Caco-2 (cell line): ENCODE measurements at regions of chr5 and their contacts with region 1.

Region 1: GRCh38 chr5:38666668-38667498 is 110.4 kb upstream of the LIFR start:
- DNase-seq: peak; percentile 52 to 56
- H3K4me3 ChIP-seq: no peak overlapping the region
- H3K4me3 Mint-ChIP-seq: no peak overlapping the region
- H3K27ac Mint-ChIP-seq: peak overlapping the region; percentile 13
- H3K4me1 ChIP-seq: peaks cover 58% of the 10 kb centered on the region
- H3K4me1 Mint-ChIP-seq: peaks cover 45% of the 10 kb centered on the region
- H3K27me3 ChIP-seq: no peaks in the 10 kb centered on the region
- H3K27me3 Mint-ChIP-seq: no peaks in the 10 kb centered on the region
- CTCF ChIP-seq: peak; percentile 60 to 73

Region 2: DNA sequence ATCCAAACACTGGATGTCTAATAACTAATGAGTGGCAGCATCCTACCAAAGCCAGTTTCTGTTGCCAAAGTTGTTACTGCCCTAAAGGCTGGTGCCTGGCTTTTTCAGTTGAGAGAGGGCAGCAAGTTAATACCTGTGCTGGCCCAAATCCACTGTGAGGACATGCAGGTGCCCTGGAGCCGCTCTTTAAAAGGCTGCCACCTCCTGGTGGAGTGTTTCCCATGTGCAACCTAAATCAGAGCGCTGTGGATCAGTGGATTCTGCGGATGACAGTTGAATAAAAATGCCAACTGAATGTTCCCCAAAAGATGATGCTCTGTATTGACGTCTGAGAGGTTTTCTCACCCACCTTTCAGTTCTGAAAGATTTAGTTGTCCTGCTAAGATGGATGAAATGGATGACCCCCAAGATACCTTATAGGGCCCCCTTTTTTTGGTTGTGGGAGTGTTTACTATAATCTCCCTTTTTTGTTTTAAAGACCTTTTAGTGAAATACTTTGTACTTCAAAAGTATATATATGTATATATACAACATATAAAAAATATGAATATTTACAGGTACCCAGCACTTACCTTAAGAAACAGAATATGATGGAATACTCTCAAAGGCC is 262.1 kb before region 1 on chr5:
- CTCF ChIA-PET with region 1: no interaction called
- POLR2A ChIA-PET with region 1: no interaction called
- intact Hi-C with region 1: no loop called
- DNase-seq: peak; percentile 46
- H3K4me3 ChIP-seq: no peak overlapping the region
- H3K4me3 Mint-ChIP-seq: no peak overlapping the region
- H3K27ac Mint-ChIP-seq: no peak overlapping the region
- H3K4me1 ChIP-seq: no peaks in the 10 kb centered on the region
- H3K4me1 Mint-ChIP-seq: no peaks in the 10 kb centered on the region
- H3K27me3 ChIP-seq: peaks cover 1% of the 10 kb centered on the region; the same call in 1 of the 2 replicates
- H3K27me3 Mint-ChIP-seq: peaks cover 43% of the 10 kb centered on the region
- CTCF ChIP-seq: peak; percentile 52 to 68

Region 3: GRCh38 chr5:38551030-38552017 is 115.6 kb before region 1 on chr5:
- CTCF ChIA-PET with region 1: no interaction called
- POLR2A ChIA-PET with region 1: no interaction called
- intact Hi-C with region 1: loop called (anchors 2 kb)
- DNase-seq: peak in 1 of 2 experiments; percentile 23
- H3K4me3 ChIP-seq: no peak overlapping the region
- H3K4me3 Mint-ChIP-seq: no peak overlapping the region
- H3K27ac Mint-ChIP-seq: peak overlapping the region; percentile 25
- H3K4me1 ChIP-seq: peaks cover 40% of the 10 kb centered on the region
- H3K4me1 Mint-ChIP-seq: peaks cover 12% of the 10 kb centered on the region
- H3K27me3 ChIP-seq: no peaks in the 10 kb centered on the region
- H3K27me3 Mint-ChIP-seq: no peaks in the 10 kb centered on the region
- CTCF ChIP-seq: peak; percentile 32 to 53

Region 4: DNA sequence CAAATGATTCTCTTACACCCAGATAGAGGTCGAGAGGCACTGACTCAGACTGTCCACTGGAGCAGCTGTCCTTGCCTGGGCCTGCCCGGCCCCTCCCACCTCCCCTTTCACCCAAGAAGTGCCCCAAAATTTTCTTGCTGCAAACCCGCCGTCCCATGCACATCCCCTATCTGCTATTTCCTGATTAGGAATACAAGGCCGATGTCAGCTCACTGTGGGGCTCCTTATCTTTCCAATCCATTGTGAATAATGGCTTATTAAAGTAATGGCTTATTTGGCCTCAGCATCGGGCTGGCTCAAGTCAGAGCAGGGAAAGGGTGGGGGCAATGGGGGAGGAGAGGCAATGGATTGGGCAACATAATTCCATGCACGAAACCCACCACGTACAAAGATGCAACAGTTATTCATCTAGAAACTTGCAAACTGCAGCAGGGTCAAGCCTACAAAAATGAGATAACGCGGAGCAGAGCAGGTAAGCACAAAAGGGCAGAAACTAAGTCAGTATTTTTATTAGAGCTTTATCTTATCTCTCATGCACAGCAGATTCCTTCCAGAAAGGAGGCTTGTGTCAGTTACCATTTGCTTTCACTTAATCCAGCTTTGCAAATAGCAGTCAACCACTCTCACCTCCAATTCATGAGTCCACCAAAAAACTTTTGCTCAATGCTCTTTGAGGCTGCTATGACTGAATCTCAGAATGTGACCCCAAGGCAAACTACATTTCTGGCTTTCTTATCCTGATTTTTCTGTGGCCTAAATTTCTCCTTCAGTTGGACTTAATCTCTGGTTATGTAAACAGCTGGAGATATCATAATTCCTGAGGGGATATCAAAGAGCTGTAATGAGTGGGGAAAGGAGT is 40.7 kb after region 1 on chr5:
- CTCF ChIA-PET with region 1: no interaction called
- POLR2A ChIA-PET with region 1: no interaction called
- intact Hi-C with region 1: no loop called
- DNase-seq: peak; percentile 52 to 77
- H3K4me3 ChIP-seq: no peak overlapping the region
- H3K4me3 Mint-ChIP-seq: peak overlapping the region; percentile 64
- H3K27ac Mint-ChIP-seq: peak overlapping the region; percentile 84
- H3K4me1 ChIP-seq: peaks cover 35% of the 10 kb centered on the region
- H3K4me1 Mint-ChIP-seq: peaks cover 29% of the 10 kb centered on the region
- H3K27me3 ChIP-seq: no peaks in the 10 kb centered on the region
- H3K27me3 Mint-ChIP-seq: no peaks in the 10 kb centered on the region
- CTCF ChIP-seq: no peak